ENCODE measurements at regions of chr7 and their contacts with region 1.

Region 1: GRCh38 chr7:118153551-118154177 is 30.3 kb upstream of the LSM8 start:
- DNase-seq: peak; percentile 43 to 78 (median 69)
- H3K4me3 ChIP-seq: no peak overlapping the region
- H3K27ac ChIP-seq: no peak overlapping the region
- H3K4me1 ChIP-seq: no peaks in the 10 kb centered on the region
- H3K27me3 ChIP-seq: peaks cover 0 to 4% (median 3%) of the 10 kb centered on the region in 5 experiments

Region 2: DNA sequence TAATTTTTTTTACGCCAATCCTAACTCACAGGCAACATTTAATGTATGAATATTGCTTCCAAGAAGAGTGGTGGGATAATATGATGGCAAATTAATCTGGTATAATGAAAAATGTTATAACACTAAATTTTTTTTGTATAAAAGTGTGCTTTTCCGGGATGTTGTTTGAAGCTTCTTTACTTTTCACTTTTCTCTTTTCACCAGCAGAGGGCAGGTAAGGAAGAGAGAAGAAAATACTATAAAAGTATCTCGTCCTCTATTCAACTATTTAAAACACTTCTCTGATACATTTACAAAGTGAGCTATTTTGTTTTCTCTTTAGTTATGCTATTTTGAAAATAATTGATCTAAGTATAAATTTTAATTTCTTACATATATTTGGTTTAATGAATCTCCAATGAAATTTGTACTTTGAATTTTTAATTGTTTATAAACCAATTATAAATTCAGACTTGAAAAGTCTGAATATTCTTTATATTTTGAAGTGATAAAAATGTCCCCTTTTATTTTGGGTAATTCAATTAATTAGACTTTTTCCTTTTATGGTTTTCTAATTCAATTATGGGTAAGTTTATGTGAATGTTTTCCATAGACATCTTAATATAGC is 694.6 kb before region 1 on chr7:
- CTCF ChIA-PET with region 1: interaction called, 14 read pairs
- POLR2A ChIA-PET with region 1: interaction called, 3 read pairs
- DNase-seq: peak; percentile 28 to 53 (median 40)
- H3K4me3 ChIP-seq: no peak overlapping the region
- H3K27ac ChIP-seq: no peak overlapping the region
- H3K4me1 ChIP-seq: no peaks in the 10 kb centered on the region
- H3K27me3 ChIP-seq: peaks cover 0 to 7% (median 0%) of the 10 kb centered on the region in 5 experiments

Region 3: DNA sequence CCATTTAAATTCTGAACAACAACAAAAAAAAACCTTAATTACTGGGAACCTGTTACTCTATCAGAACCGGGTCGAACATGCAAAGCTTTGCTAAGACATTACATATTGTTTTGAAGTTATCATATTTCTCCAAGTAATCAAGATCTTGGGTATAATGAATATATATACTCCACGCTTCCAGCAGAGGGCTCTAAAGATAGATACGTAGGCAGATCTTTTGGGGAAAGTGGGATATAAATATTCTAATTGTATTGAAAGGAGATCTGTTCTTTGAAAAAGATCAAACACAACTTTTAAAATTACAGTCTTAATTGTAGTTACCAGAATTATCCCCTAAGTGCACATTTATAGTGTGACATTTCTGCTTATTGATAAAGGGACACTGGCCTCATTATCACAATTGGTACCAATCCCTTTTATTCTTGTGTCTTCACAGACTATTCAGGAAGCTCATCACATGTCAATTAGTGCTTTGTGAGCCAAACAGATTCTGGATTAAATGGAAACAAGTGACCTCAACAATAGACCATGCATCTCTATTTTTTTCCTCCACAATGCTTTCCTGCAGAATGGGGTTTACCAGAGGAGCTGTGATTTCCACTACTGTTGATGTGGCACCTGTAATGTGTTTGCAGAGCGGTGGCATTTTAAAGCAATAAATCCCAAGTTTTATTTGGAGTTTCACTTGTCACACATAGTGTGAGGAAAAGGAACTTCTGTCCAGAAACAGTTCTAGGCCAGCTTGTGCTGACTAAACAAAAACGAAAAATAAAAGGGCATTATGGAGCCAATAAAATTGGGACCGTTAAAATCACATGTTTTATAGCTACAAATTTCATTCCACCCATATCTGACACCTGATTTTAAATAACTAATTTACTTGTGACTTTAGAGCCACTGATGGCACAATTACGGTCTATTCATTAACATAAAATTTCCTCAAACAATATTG is 402.8 kb before region 1 on chr7:
- CTCF ChIA-PET with region 1: interaction called, 10 read pairs
- POLR2A ChIA-PET with region 1: no interaction called
- DNase-seq: peak; percentile 26 to 47 (median 35)
- H3K4me3 ChIP-seq: no peak overlapping the region
- H3K27ac ChIP-seq: no peak overlapping the region
- H3K4me1 ChIP-seq: no peaks in the 10 kb centered on the region
- H3K27me3 ChIP-seq: no peaks in the 10 kb centered on the region

Region 4: GRCh38 chr7:118224521-118224920 is 70.9 kb after region 1 on chr7 and contains the start of gene ANKRD7:
- CTCF ChIA-PET with region 1: no interaction called
- POLR2A ChIA-PET with region 1: no interaction called
- DNase-seq: no peak
- H3K4me3 ChIP-seq: no peak within 1 kb of the TSS
- H3K27ac ChIP-seq: no peak within 1 kb of the TSS
- H3K4me1 ChIP-seq: no peaks in the 10 kb centered on the region
- H3K27me3 ChIP-seq: no peaks in the 10 kb centered on the region

Region 5: DNA sequence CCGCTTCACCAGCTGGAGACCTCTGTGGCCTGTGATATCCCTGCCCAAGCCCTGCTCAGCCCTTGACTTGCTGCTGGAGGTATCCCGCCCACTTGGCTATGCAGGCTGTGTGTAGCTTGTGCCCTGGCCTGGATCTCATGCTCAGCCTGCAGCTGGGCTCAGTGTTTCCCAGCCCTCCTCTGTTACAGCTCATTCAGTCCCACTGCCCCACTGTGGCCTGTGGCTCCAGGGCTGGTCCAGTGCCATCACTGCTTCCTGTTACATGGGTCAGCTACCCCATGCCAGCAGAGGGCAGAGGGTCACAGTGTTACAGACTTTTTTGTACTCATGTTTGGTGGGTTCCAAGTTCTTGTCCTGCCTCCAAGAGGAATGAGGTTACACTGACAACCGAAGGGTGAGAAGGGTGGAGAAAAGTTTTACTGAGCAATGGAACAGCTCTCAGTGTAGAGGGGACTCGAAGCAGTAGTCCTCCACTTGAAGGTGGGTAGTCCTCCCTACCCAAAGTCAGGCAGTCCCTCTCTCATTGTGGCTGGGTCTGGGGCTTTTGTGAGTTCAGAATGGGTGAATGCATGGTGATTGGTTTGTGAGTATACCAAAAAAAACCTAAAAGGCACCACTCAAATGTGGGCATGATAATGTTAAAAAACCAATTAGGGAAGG is 171.3 kb after region 1 on chr7:
- CTCF ChIA-PET with region 1: no interaction called
- POLR2A ChIA-PET with region 1: no interaction called
- DNase-seq: no peak
- H3K4me3 ChIP-seq: no peak overlapping the region
- H3K27ac ChIP-seq: no peak overlapping the region
- H3K4me1 ChIP-seq: no peaks in the 10 kb centered on the region
- H3K27me3 ChIP-seq: peaks cover 5 to 19% (median 10%) of the 10 kb centered on the region in 5 experiments